ENCODE measurements at regions of chr6 and their contacts with region 1.

Region 1: GRCh38 chr6:117976030-117976651 is 69.1 kb downstream of the SLC35F1 start:
- DNase-seq: no peak
- ATAC-seq: peak; percentile 76
- H3K4me3 Mint-ChIP-seq: no peak overlapping the region
- H3K27ac Mint-ChIP-seq: no peak overlapping the region
- H3K4me1 Mint-ChIP-seq: peaks cover 16% of the 10 kb centered on the region
- H3K27me3 Mint-ChIP-seq: peaks cover 5% of the 10 kb centered on the region; the same call in 1 of the 2 replicates
- CTCF ChIP-seq: peak; percentile 57

Region 2: GRCh38 chr6:117840541-117840983 is 135.6 kb before region 1 on chr6:
- CTCF ChIA-PET with region 1: interaction called, 13 read pairs
- POLR2A ChIA-PET with region 1: no interaction called
- DNase-seq: no peak
- ATAC-seq: peak; percentile 64
- H3K4me3 Mint-ChIP-seq: no peak overlapping the region
- H3K27ac Mint-ChIP-seq: no peak overlapping the region
- H3K4me1 Mint-ChIP-seq: peaks cover 10% of the 10 kb centered on the region
- H3K27me3 Mint-ChIP-seq: no peaks in the 10 kb centered on the region; the same call in 1 of the 2 replicates
- CTCF ChIP-seq: peak; percentile 55

Region 3: DNA sequence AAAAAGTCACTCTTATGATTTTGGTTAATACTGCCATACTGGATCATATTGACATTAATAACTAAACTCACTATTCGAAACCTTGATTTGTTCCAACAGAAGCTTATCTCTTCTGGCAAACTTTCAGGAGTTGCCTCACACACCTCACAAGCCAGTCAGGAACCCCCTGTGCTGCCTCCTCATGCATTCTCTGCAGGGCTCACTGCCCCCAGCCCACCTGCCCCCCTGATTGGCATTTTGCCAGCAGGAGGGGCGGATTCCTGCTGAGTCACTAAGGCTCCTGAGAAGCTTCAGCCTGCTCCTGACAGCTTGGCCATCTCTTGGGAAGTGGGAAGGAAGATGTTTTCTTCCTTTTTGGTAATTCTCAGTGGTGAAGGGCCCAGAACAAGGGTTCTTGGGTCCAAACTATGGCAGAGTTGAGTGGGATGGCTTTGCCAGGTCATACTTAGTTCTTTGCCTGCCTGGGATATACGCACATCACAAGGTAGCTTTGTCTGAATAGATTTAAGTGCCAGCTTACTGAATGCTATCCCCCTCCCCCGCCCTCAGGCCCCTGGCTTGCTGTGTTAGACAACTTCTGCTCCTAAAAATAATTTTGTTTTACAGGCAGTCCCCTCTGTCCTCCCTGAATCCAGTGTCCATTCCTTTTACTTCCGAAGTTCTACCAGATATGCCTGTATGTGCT is 37.7 kb before region 1 on chr6:
- CTCF ChIA-PET with region 1: no interaction called
- POLR2A ChIA-PET with region 1: no interaction called
- DNase-seq: peak; percentile 38
- ATAC-seq: peak; percentile 76
- H3K4me3 Mint-ChIP-seq: no peak overlapping the region
- H3K27ac Mint-ChIP-seq: no peak overlapping the region
- H3K4me1 Mint-ChIP-seq: peaks cover 22% of the 10 kb centered on the region
- H3K27me3 Mint-ChIP-seq: no peaks in the 10 kb centered on the region
- CTCF ChIP-seq: no peak

Region 4: GRCh38 chr6:117958536-117958935 is 17.6 kb before region 1 on chr6:
- CTCF ChIA-PET with region 1: no interaction called
- POLR2A ChIA-PET with region 1: no interaction called
- DNase-seq: no peak
- ATAC-seq: no peak
- H3K4me3 Mint-ChIP-seq: no peak overlapping the region
- H3K27ac Mint-ChIP-seq: no peak overlapping the region
- H3K4me1 Mint-ChIP-seq: no peaks in the 10 kb centered on the region
- H3K27me3 Mint-ChIP-seq: no peaks in the 10 kb centered on the region
- CTCF ChIP-seq: no peak

Region 5: DNA sequence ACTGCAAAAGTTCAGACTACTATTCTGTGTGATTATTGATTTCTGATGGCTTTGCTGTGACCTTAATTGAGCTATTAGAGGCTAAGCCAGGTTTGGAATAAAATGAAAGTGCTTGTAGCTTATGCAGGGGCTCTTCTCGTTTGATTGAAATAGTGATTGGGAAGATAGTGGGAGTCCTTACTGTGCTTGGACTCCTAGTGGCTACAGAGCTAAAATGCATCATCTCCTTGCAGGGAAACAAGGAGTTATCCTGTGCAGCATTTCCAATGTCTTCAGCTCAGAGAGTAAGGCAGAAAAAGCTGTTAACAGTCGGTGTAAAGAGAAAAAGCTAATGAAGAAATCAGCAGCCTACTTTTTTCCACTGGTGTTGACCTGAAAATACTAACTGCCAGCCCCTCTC is 104.4 kb after region 1 on chr6:
- CTCF ChIA-PET with region 1: interaction called, 12 read pairs
- POLR2A ChIA-PET with region 1: no interaction called
- DNase-seq: no peak
- ATAC-seq: peak; percentile 91
- H3K4me3 Mint-ChIP-seq: no peak overlapping the region
- H3K27ac Mint-ChIP-seq: no peak overlapping the region
- H3K4me1 Mint-ChIP-seq: peaks cover 13% of the 10 kb centered on the region
- H3K27me3 Mint-ChIP-seq: no peaks in the 10 kb centered on the region
- CTCF ChIP-seq: no peak

Measured in WTC11 (cell line).